Astrocyte of the cerebellum (primary cell): ENCODE measurements at regions of chr1 and their contacts with region 1.

Region 1: GRCh38 chr1:212621951-212622305 is 13.4 kb downstream of the ATF3 start:
- DNase-seq: no peak
- H3K4me3 ChIP-seq: no peak overlapping the region
- CTCF ChIP-seq: no peak

Region 2: DNA sequence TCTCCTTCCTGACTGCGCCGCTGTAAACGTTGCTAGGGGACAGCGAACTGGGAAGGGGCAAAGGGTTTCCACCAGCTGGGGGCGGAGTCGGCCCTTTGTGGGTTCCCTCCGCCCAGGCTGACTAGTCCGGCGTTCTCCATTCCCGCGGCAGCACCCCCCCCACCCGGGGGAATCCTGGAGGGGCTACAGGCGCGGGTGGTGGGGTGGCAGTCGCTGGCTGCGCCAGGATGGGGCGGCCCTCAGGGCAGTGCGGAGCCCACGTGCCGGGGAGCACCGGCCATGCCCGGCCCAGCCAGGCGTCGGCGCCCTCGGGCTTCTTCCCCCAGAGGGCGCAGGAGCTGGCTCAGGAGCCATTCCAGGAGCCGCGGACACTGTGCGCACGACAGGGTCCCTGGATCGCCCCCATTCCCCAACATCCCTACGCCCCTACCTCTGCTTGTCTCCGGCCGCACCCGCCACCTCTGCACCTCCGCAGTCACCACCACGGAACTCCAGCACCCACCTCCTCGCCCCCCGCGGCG is 77.2 kb after region 1 on chr1:
- in situ Hi-C with region 1: loop called (anchors 5 kb)
- DNase-seq: no peak
- H3K4me3 ChIP-seq: peak overlapping the region; percentile 37
- CTCF ChIP-seq: peak; percentile 54